ENCODE measurements at regions of chr6 and their contacts with region 1.

Region 1: GRCh38 chr6:30914076-30914853 is at the start of gene VARS2:
- DNase-seq: peak; percentile 72
- ATAC-seq: peak; percentile 96
- H3K4me3 ChIP-seq: peak within 1 kb of the TSS; percentile 91
- H3K27ac ChIP-seq: peak within 1 kb of the TSS; percentile 87
- H3K4me1 ChIP-seq: peaks cover 4% of the 10 kb centered on the region
- H3K27me3 ChIP-seq: no peaks in the 10 kb centered on the region
- CTCF ChIP-seq: peak; percentile 40 to 56 (median 49); a peak in 4 of 6 replicates
- EP300 ChIP-seq: no peak
- POLR2A ChIP-seq: peak; percentile 87
- RAD21 ChIP-seq: peak; percentile 59
- polyA plus RNA-seq, gene VARS2: 3.8 to 4.3 TPM

Region 2: GRCh38 chr6:30678964-30679726 is 235.1 kb before region 1 on chr6:
- CTCF ChIA-PET with region 1: interaction called, 13 read pairs
- POLR2A ChIA-PET with region 1: no interaction called
- RAD21 ChIA-PET with region 1: interaction called, 9 read pairs
- SMC1A ChIA-PET with region 1: interaction called, 4 read pairs
- in situ Hi-C with region 1: no loop called
- intact Hi-C with region 1: no loop called
- DNase-seq: no peak
- ATAC-seq: peak; percentile 79
- H3K4me3 ChIP-seq: peak overlapping the region; percentile 100
- H3K27ac ChIP-seq: peak overlapping the region; percentile 65
- H3K4me1 ChIP-seq: peaks cover 8% of the 10 kb centered on the region
- H3K27me3 ChIP-seq: no peaks in the 10 kb centered on the region
- CTCF ChIP-seq: peak; percentile 97 to 98 (median 98); a peak in 5 of 6 replicates
- EP300 ChIP-seq: no peak
- POLR2A ChIP-seq: 0 out of 2 replicates have a peak, but pooled peaks have one; percentile 29
- RAD21 ChIP-seq: peak; percentile 97

Region 3: GRCh38 chr6:30707281-30707872 is 206.9 kb before region 1 on chr6:
- CTCF ChIA-PET with region 1: no interaction called
- POLR2A ChIA-PET with region 1: no interaction called
- RAD21 ChIA-PET with region 1: no interaction called
- SMC1A ChIA-PET with region 1: no interaction called
- in situ Hi-C with region 1: no loop called
- intact Hi-C with region 1: no loop called
- DNase-seq: no peak
- ATAC-seq: no peak
- H3K4me3 ChIP-seq: no peak overlapping the region
- H3K27ac ChIP-seq: no peak overlapping the region
- H3K4me1 ChIP-seq: peaks cover 18% of the 10 kb centered on the region
- H3K27me3 ChIP-seq: no peaks in the 10 kb centered on the region
- CTCF ChIP-seq: no peak
- EP300 ChIP-seq: no peak
- POLR2A ChIP-seq: no peak
- RAD21 ChIP-seq: no peak

Region 4: DNA sequence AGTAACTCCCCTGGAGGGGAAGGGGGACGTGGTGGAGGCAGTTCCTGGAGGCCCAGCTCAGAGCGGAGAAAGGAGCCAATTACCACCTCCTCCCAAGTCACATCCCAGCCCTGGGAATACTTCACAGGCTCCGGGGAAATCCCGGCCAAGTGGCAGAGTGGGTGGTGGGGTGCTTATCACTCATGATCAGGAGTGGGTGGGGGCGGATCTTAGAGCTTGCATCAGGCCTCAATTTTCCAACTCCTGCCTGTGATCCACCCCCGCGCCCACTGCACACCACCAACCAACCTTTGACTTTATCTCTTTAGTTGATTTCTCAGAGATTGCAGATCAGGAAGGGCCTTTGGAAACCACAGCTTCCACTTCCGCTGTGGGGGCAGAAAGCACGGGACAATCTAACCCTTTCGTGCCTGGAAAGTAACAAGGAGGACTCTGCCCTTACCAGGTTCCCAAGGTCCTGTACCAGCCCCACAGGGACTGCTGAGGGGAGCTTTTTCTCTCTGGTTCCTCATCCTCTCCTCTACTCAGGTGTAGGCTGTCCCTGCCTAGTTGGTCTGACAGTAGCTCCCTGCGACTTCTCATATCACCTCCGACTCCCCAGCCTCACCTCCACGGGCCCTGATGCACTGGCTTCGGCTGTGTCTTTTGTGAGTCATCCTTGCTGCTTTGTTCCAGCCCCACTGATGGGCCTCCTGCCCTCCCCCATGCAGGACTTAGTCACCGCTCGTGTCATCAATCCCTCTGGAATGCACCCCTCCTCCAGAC is 145.0 kb before region 1 on chr6:
- CTCF ChIA-PET with region 1: no interaction called
- POLR2A ChIA-PET with region 1: no interaction called
- RAD21 ChIA-PET with region 1: interaction called, 10 read pairs
- SMC1A ChIA-PET with region 1: interaction called, 4 read pairs
- in situ Hi-C with region 1: no loop called
- intact Hi-C with region 1: no loop called
- DNase-seq: no peak
- ATAC-seq: peak; percentile 38
- H3K4me3 ChIP-seq: no peak overlapping the region
- H3K27ac ChIP-seq: no peak overlapping the region; the same call in 1 of the 2 replicates
- H3K4me1 ChIP-seq: peaks cover 33% of the 10 kb centered on the region
- H3K27me3 ChIP-seq: no peaks in the 10 kb centered on the region
- CTCF ChIP-seq: no peak
- EP300 ChIP-seq: peak in 1 of 2 experiments; percentile 56; a peak in 2 of 4 replicates
- POLR2A ChIP-seq: no peak
- RAD21 ChIP-seq: no peak

Region 5: DNA sequence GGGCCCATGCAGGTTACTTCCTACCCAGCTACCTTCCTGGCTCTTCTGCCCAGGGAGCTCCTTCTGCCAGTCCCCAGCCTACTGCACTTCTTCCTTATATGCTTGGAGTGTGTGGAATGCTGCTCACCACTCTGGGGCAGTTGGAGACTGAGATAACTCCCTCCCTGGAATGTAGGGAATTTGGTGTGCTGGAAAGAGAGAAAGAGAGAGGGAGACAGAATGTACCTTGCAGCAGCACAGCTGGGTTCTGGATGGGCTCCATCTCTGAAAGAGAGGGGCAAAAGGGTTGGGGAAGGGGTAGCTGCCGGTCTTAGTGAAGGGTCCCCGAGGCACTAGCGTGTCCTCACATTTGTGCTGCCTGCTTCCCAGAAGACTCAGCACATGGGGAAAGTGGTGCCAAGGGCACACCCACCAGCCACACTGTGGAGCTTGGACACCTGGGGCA is 70.2 kb before region 1 on chr6:
- CTCF ChIA-PET with region 1: interaction called, 10 read pairs
- POLR2A ChIA-PET with region 1: no interaction called
- RAD21 ChIA-PET with region 1: interaction called, 11 read pairs
- SMC1A ChIA-PET with region 1: interaction called, 4 read pairs
- in situ Hi-C with region 1: no loop called
- intact Hi-C with region 1: no loop called
- DNase-seq: no peak
- ATAC-seq: no peak
- H3K4me3 ChIP-seq: no peak overlapping the region
- H3K27ac ChIP-seq: no peak overlapping the region
- H3K4me1 ChIP-seq: no peaks in the 10 kb centered on the region
- H3K27me3 ChIP-seq: no peaks in the 10 kb centered on the region; a peak in 1 of 4 replicates
- CTCF ChIP-seq: no peak
- EP300 ChIP-seq: no peak
- POLR2A ChIP-seq: no peak
- RAD21 ChIP-seq: no peak

Region 6: GRCh38 chr6:30898750-30899360 is 15.4 kb before region 1 on chr6:
- CTCF ChIA-PET with region 1: interaction called, 14 read pairs
- POLR2A ChIA-PET with region 1: interaction called, 37 read pairs
- RAD21 ChIA-PET with region 1: interaction called, 31 read pairs
- SMC1A ChIA-PET with region 1: interaction called, 8 read pairs
- in situ Hi-C with region 1: no loop called
- intact Hi-C with region 1: no loop called
- DNase-seq: no peak
- ATAC-seq: no peak
- H3K4me3 ChIP-seq: no peak overlapping the region
- H3K27ac ChIP-seq: no peak overlapping the region
- H3K4me1 ChIP-seq: peaks cover 32% of the 10 kb centered on the region
- H3K27me3 ChIP-seq: no peaks in the 10 kb centered on the region
- CTCF ChIP-seq: no peak
- EP300 ChIP-seq: no peak
- POLR2A ChIP-seq: no peak
- RAD21 ChIP-seq: no peak

Region 7: DNA sequence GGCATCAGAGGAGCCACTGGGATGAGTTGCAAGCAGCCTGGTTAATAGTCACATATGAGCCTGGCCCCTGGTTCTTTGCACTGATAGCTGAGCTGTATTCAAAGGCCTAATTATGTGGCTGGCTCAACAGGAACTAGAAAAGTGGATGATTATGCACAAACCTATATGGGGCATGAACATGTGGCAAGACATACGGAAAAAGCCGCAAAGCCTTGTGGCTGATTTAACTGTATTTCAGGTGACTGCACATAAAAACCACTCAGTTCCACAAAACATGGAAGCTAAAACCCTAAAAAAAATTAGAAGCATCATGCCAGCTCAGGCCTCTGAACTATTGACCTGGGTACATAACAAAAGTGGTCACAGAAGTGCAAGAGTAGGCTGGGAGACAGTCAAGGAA is 83.0 kb after region 1 on chr6:
- CTCF ChIA-PET with region 1: no interaction called
- POLR2A ChIA-PET with region 1: no interaction called
- RAD21 ChIA-PET with region 1: no interaction called
- SMC1A ChIA-PET with region 1: no interaction called
- in situ Hi-C with region 1: no loop called
- intact Hi-C with region 1: no loop called
- DNase-seq: no peak
- ATAC-seq: no peak
- H3K4me3 ChIP-seq: no peak overlapping the region
- H3K27ac ChIP-seq: no peak overlapping the region
- H3K4me1 ChIP-seq: no peaks in the 10 kb centered on the region
- H3K27me3 ChIP-seq: no peaks in the 10 kb centered on the region
- CTCF ChIP-seq: no peak
- EP300 ChIP-seq: no peak
- POLR2A ChIP-seq: no peak
- RAD21 ChIP-seq: no peak

Region 8: GRCh38 chr6:31058128-31058894 is 144.0 kb after region 1 on chr6:
- CTCF ChIA-PET with region 1: interaction called, 18 read pairs
- POLR2A ChIA-PET with region 1: no interaction called
- RAD21 ChIA-PET with region 1: interaction called, 3 read pairs
- SMC1A ChIA-PET with region 1: no interaction called
- in situ Hi-C with region 1: no loop called
- intact Hi-C with region 1: no loop called
- DNase-seq: no peak
- ATAC-seq: peak; percentile 68
- H3K4me3 ChIP-seq: no peak overlapping the region
- H3K27ac ChIP-seq: no peak overlapping the region
- H3K4me1 ChIP-seq: no peaks in the 10 kb centered on the region
- H3K27me3 ChIP-seq: no peaks in the 10 kb centered on the region; a peak in 1 of 4 replicates
- CTCF ChIP-seq: peak; percentile 42 to 57 (median 53)
- EP300 ChIP-seq: no peak
- POLR2A ChIP-seq: no peak
- RAD21 ChIP-seq: no peak

Region 9: DNA sequence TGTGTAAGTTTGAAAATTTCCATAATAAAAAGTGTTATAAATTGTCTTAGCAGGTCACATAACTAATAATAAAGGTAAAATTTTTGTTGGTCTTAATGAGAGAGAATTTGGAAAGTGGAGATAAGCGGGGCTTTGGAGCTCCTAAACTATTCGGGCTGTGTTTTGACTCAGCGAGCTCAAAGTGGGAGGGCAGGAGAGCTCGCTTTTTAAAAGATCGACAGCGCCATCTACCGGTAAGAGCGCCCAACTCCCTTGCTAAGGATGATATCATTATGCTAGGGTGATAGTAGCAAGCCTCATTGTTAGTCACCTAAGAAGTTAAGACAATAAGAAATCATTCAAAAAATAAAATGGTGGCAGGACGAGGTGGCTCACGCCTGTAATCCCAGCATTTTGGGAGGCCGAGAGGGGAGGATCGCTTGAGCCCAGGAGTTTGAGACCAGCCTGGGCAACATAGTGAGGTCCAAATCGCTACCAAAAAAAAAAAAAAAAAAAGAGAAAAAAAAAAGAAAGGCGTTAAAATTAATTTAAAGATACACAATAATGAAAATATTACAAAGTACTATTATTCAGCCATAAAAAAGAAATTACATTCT is 173.3 kb after region 1 on chr6:
- CTCF ChIA-PET with region 1: interaction called, 119 read pairs
- POLR2A ChIA-PET with region 1: no interaction called
- RAD21 ChIA-PET with region 1: interaction called, 52 read pairs
- SMC1A ChIA-PET with region 1: interaction called, 33 read pairs
- in situ Hi-C with region 1: no loop called
- intact Hi-C with region 1: loop called (anchors 5 kb)
- DNase-seq: peak; percentile 25
- ATAC-seq: peak; percentile 98
- H3K4me3 ChIP-seq: no peak overlapping the region
- H3K27ac ChIP-seq: no peak overlapping the region
- H3K4me1 ChIP-seq: no peaks in the 10 kb centered on the region
- H3K27me3 ChIP-seq: no peaks in the 10 kb centered on the region; a peak in 1 of 4 replicates
- CTCF ChIP-seq: peak; percentile 67 to 72 (median 71)
- EP300 ChIP-seq: no peak
- POLR2A ChIP-seq: no peak
- RAD21 ChIP-seq: peak; percentile 71